ENCODE measurements at regions of chrX and their contacts with region 1.

Region 1: GRCh38 chrX:71181910-71182799 is 37.5 kb downstream of the NLGN3 start:
- DNase-seq: peak; percentile 42 to 86 (median 80)
- ATAC-seq: peak; percentile 95
- H3K4me3 ChIP-seq: peak overlapping the region; percentile 85
- H3K4me3 Mint-ChIP-seq: peak overlapping the region; percentile 83 to 98 (median 96)
- H3K27ac ChIP-seq: peak overlapping the region; percentile 94
- H3K27ac Mint-ChIP-seq: peak overlapping the region; percentile 95 to 100 (median 98)
- H3K4me1 ChIP-seq: peaks cover 0 to 10% of the 10 kb centered on the region in 2 donors
- H3K4me1 Mint-ChIP-seq: peaks cover 0 to 28% (median 21%) of the 10 kb centered on the region in 7 donors
- H3K27me3 ChIP-seq: no peaks in the 10 kb centered on the region
- H3K27me3 Mint-ChIP-seq: no peaks in the 10 kb centered on the region

Region 2: GRCh38 chrX:70454441-70455365 is 727.5 kb before region 1 on chrX:
- CTCF ChIA-PET with region 1: no interaction called
- POLR2A ChIA-PET with region 1: no interaction called
- intact Hi-C with region 1: loop called in 1 of 2 experiments (anchors 5 kb)
- DNase-seq: peak in 8 of 9 donors; percentile 39 to 72 (median 52)
- ATAC-seq: peak; percentile 80
- H3K4me3 ChIP-seq: peak overlapping the region; percentile 57
- H3K4me3 Mint-ChIP-seq: peak overlapping the region; percentile 66 to 93 (median 86)
- H3K27ac ChIP-seq: peak overlapping the region; percentile 60
- H3K27ac Mint-ChIP-seq: peak overlapping the region; percentile 40 to 95 (median 79)
- H3K4me1 ChIP-seq: peaks cover 8 to 11% of the 10 kb centered on the region in 2 donors
- H3K4me1 Mint-ChIP-seq: peaks cover 12 to 45% (median 32%) of the 10 kb centered on the region in 7 donors
- H3K27me3 ChIP-seq: no peaks in the 10 kb centered on the region
- H3K27me3 Mint-ChIP-seq: no peaks in the 10 kb centered on the region

Region 3: DNA sequence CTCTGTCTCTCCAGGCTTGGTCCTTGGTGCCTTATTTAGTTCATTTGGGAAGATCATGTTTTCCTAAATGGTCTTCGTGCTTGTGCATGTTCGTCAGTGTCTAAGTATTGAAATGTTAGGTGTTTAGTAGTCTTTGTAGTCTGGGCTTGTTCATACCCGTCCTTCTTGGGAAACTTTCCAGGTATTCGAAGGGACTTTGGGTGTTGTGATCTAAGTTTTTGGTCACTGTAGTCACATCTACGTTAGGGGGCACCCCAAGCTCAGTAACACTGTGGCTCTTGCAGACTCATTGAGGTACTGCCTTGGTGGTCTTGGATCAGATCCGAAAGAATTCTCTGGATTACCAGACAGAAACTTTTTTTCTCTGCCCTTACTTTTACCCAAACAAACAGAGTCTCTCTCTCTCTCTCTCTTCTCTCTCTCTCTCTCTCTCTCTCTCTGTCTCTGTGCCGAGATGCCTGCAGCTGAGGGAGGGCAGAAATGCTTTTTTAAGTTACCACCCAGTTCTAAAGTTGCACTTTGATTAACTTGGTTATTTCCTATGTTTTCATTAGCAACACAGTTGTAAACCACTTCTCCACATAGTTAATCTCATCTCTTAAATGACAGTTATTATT is 183.6 kb before region 1 on chrX:
- CTCF ChIA-PET with region 1: no interaction called
- POLR2A ChIA-PET with region 1: no interaction called
- intact Hi-C with region 1: loop called (anchors 1 kb)
- DNase-seq: peak in 4 of 9 donors; percentile 2 to 27 (median 20)
- ATAC-seq: no peak
- H3K4me3 ChIP-seq: no peak overlapping the region
- H3K4me3 Mint-ChIP-seq: peak overlapping the region in 1 of 10 donors; percentile 40
- H3K27ac ChIP-seq: no peak overlapping the region
- H3K27ac Mint-ChIP-seq: peak overlapping the region in 1 of 9 donors; percentile 56
- H3K4me1 ChIP-seq: peaks cover 0 to 7% of the 10 kb centered on the region in 2 donors
- H3K4me1 Mint-ChIP-seq: peaks cover 2 to 22% (median 19%) of the 10 kb centered on the region in 7 donors
- H3K27me3 ChIP-seq: no peaks in the 10 kb centered on the region
- H3K27me3 Mint-ChIP-seq: peaks cover 0 to 18% (median 0%) of the 10 kb centered on the region in 5 donors

Region 4: GRCh38 chrX:71103110-71103983 is 78.8 kb before region 1 on chrX:
- CTCF ChIA-PET with region 1: interaction called, 18 read pairs
- POLR2A ChIA-PET with region 1: interaction called, 9 read pairs
- intact Hi-C with region 1: loop called in 1 of 2 experiments (anchors 1 kb)
- DNase-seq: peak in 8 of 9 donors; percentile 46 to 61 (median 58)
- ATAC-seq: peak; percentile 73
- H3K4me3 ChIP-seq: peak overlapping the region; percentile 45
- H3K4me3 Mint-ChIP-seq: peak overlapping the region; percentile 75 to 98 (median 85)
- H3K27ac ChIP-seq: peak overlapping the region; percentile 82
- H3K27ac Mint-ChIP-seq: peak overlapping the region; percentile 90 to 99 (median 92)
- H3K4me1 ChIP-seq: peaks cover 62 to 74% of the 10 kb centered on the region in 2 donors
- H3K4me1 Mint-ChIP-seq: peaks cover 44 to 92% (median 79%) of the 10 kb centered on the region in 7 donors
- H3K27me3 ChIP-seq: no peaks in the 10 kb centered on the region
- H3K27me3 Mint-ChIP-seq: no peaks in the 10 kb centered on the region

Region 5: DNA sequence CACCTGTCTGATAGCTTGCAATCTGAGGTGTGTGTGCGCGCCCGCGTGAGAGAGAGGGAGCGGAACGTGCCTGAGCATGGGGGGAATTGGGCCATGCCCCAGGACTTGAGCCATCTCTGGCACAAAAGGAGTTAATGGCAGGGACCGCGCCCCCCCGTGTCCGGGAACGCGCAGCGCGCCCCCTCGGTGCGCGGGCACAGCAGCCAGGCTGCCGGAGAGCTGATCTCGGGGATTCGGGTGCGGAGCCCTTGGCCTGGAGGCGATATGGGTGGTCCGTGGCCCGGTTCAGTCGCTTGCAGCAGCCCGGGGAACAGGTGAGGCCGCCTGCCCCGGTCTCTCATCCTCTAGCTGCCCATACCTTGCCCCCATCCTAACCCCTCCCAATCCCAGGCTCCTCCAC is 37.5 kb before region 1 on chrX and contains the start of gene NLGN3:
- CTCF ChIA-PET with region 1: interaction called, 4 read pairs
- POLR2A ChIA-PET with region 1: no interaction called
- intact Hi-C with region 1: loop called in 1 of 2 experiments (anchors 5 kb)
- DNase-seq: no peak
- ATAC-seq: no peak
- H3K4me3 ChIP-seq: no peak within 1 kb of the TSS
- H3K4me3 Mint-ChIP-seq: peak within 1 kb of the TSS in 6 of 10 donors; percentile 53 to 87 (median 61)
- H3K27ac ChIP-seq: no peak within 1 kb of the TSS
- H3K27ac Mint-ChIP-seq: peak within 1 kb of the TSS in 6 of 9 donors; percentile 14 to 64 (median 55)
- H3K4me1 ChIP-seq: peaks cover 0 to 10% of the 10 kb centered on the region in 2 donors
- H3K4me1 Mint-ChIP-seq: peaks cover 5 to 28% (median 21%) of the 10 kb centered on the region in 7 donors
- H3K27me3 ChIP-seq: no peaks in the 10 kb centered on the region
- H3K27me3 Mint-ChIP-seq: no peaks in the 10 kb centered on the region
- total RNA-seq, gene NLGN3: 2.3 to 4.6 (median 3.0) TPM

Region 6: GRCh38 chrX:71283403-71284143 is 101.4 kb after region 1 on chrX and contains the start of gene NONO:
- CTCF ChIA-PET with region 1: interaction called, 5 read pairs
- POLR2A ChIA-PET with region 1: interaction called, 28 read pairs
- intact Hi-C with region 1: loop called (anchors 1 to 2 kb)
- DNase-seq: peak; percentile 48 to 96 (median 89)
- ATAC-seq: peak; percentile 91
- H3K4me3 ChIP-seq: peak within 1 kb of the TSS; percentile 88
- H3K4me3 Mint-ChIP-seq: peak within 1 kb of the TSS; percentile 94 to 99 (median 98)
- H3K27ac ChIP-seq: peak within 1 kb of the TSS; percentile 93
- H3K27ac Mint-ChIP-seq: peak within 1 kb of the TSS; percentile 97 to 100 (median 99)
- H3K4me1 ChIP-seq: peaks cover 0 to 8% of the 10 kb centered on the region in 2 donors
- H3K4me1 Mint-ChIP-seq: peaks cover under 1 to 28% (median 17%) of the 10 kb centered on the region in 7 donors
- H3K27me3 ChIP-seq: no peaks in the 10 kb centered on the region
- H3K27me3 Mint-ChIP-seq: peaks cover 0 to 3% (median 0%) of the 10 kb centered on the region in 5 donors
- total RNA-seq, gene NONO: 334 to 488 (median 371) TPM

Region 7: DNA sequence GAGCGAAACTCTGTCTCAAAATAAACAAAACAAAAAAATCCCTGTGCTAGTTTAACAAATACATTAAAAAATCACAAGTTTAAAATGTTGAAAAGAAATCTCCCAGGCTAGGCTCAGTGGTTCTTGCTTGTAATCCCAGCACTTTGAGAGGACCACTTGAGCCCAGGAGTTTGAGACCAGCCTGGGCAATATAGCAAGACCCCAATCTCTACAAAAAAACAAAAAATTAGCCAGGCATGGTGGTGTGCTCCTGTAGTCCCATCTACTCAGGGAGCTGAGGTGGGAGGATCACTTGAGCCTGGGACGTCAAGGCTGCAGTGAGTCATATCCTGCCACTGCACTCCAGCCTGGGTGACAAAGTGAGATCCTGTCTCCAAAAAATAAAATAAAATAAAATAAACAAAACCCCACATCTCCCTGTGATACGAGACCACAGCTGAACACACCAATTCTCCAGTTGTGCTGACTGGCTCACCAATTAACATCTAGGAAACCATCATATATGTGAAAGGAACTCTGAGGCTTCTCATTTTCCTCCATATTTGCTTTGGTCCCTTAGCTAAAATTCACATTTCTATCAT is 1087.6 kb after region 1 on chrX:
- CTCF ChIA-PET with region 1: no interaction called
- POLR2A ChIA-PET with region 1: no interaction called
- intact Hi-C with region 1: loop called in 1 of 2 experiments (anchors 10 kb)
- DNase-seq: no peak
- ATAC-seq: no peak
- H3K4me3 ChIP-seq: no peak overlapping the region
- H3K4me3 Mint-ChIP-seq: no peak overlapping the region
- H3K27ac ChIP-seq: no peak overlapping the region
- H3K27ac Mint-ChIP-seq: peak overlapping the region in 3 of 9 donors; percentile 33 to 78 (median 38)
- H3K4me1 ChIP-seq: peaks cover 6 to 17% of the 10 kb centered on the region in 2 donors
- H3K4me1 Mint-ChIP-seq: peaks cover 10 to 41% (median 24%) of the 10 kb centered on the region in 7 donors
- H3K27me3 ChIP-seq: no peaks in the 10 kb centered on the region
- H3K27me3 Mint-ChIP-seq: no peaks in the 10 kb centered on the region